ENCODE measurements at regions of chr6 and their contacts with region 1.

Region 1: GRCh38 chr6:109164322-109164721 is 69.0 kb downstream of the CEP57L1 start:
- DNase-seq: no peak
- H3K4me3 Mint-ChIP-seq: no peak overlapping the region
- H3K27ac Mint-ChIP-seq: no peak overlapping the region
- H3K4me1 Mint-ChIP-seq: peaks cover 18% of the 10 kb centered on the region
- H3K27me3 Mint-ChIP-seq: no peaks in the 10 kb centered on the region
- CTCF ChIP-seq: no peak

Region 2: DNA sequence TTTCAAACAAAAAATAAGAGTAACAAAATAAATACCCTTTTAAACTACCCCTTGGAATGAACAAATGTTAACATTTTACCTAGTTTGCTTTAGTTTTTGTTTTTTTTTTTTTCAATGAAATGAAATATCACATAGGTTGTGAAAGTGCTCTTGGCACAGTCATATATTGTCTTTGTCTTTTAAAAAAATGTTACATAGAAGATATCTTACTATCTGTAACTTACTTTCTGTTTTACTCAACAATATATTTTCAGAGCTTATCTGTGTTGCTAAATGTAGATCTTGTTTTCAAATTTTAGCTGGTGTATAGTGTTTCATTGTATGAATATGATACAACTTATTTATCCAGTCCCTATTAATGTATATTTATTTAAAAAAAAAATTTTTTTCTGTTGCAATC is 60.4 kb before region 1 on chr6:
- CTCF ChIA-PET with region 1: no interaction called
- intact Hi-C with region 1: loop called (anchors 5 kb)
- DNase-seq: no peak
- H3K4me3 Mint-ChIP-seq: no peak overlapping the region
- H3K27ac Mint-ChIP-seq: no peak overlapping the region
- H3K4me1 Mint-ChIP-seq: no peaks in the 10 kb centered on the region
- H3K27me3 Mint-ChIP-seq: no peaks in the 10 kb centered on the region
- CTCF ChIP-seq: no peak